Heart right ventricle (tissue), 16 donors: ENCODE measurements at regions of chr1 and their contacts with region 1.

Region 1: GRCh38 chr1:8348777-8349491 is 31.0 kb downstream of the SLC45A1 start:
- DNase-seq: peak; percentile 63 to 76
- ATAC-seq: peak; percentile 32 to 73 (median 58)
- H3K4me3 ChIP-seq: no peak overlapping the region
- H3K27ac ChIP-seq: no peak overlapping the region
- H3K4me1 ChIP-seq: peaks cover 9 to 60% (median 42%) of the 10 kb centered on the region in 9 donors
- H3K27me3 ChIP-seq: no peaks in the 10 kb centered on the region
- CTCF ChIP-seq: peak; percentile 80 to 90 (median 85)

Region 2: GRCh38 chr1:7975212-7975865 is 373.6 kb before region 1 on chr1:
- intact Hi-C with region 1: loop called in 3 of 10 experiments (anchors 5 to 10 kb)
- DNase-seq: peak; percentile 59 to 60
- ATAC-seq: peak; percentile 74 to 98 (median 94)
- H3K4me3 ChIP-seq: no peak overlapping the region
- H3K27ac ChIP-seq: no peak overlapping the region
- H3K4me1 ChIP-seq: peaks cover 0 to 16% (median 7%) of the 10 kb centered on the region in 9 donors
- H3K27me3 ChIP-seq: no peaks in the 10 kb centered on the region
- CTCF ChIP-seq: peak; percentile 69 to 89 (median 81)

Region 3: GRCh38 chr1:8015036-8015808 is 333.7 kb before region 1 on chr1:
- intact Hi-C with region 1: loop called in 4 of 10 experiments (anchors 10 kb)
- DNase-seq: peak in 1 of 2 donors; percentile 78
- ATAC-seq: peak; percentile 52 to 82 (median 75)
- H3K4me3 ChIP-seq: peak overlapping the region in 1 of 10 donors; percentile 8
- H3K27ac ChIP-seq: peak overlapping the region in 8 of 10 donors; percentile 9 to 56 (median 38)
- H3K4me1 ChIP-seq: peaks cover 8 to 52% (median 36%) of the 10 kb centered on the region in 9 donors
- H3K27me3 ChIP-seq: peaks cover 0 to 6% (median 0%) of the 10 kb centered on the region in 7 donors
- CTCF ChIP-seq: peak; percentile 33 to 80 (median 66)

Region 4: DNA sequence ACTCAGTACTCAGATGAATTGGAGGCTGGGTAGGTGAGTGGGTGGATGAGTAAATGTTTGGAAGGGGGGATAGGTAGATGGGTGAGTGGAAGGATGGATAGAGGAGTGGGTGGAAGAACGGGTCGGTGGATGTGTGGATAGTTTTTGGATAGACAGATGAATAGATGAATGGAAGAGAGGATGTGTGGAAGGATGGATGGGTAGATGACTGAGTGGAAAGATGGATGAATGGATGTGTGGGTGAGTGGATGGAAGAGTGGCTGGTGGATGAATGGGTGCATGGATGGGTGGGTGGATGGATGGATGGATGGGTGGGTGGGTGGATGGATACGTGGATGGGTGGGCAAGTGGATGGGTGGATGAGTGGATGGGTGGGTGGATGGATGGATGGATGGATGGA is 27.3 kb before region 1 on chr1:
- intact Hi-C with region 1: loop called in 1 of 10 experiments (anchors 1 kb)
- DNase-seq: no peak
- ATAC-seq: no peak
- H3K4me3 ChIP-seq: no peak overlapping the region
- H3K27ac ChIP-seq: no peak overlapping the region
- H3K4me1 ChIP-seq: peaks cover 7 to 34% (median 23%) of the 10 kb centered on the region in 9 donors
- H3K27me3 ChIP-seq: peaks cover 0 to 26% (median 0%) of the 10 kb centered on the region in 7 donors
- CTCF ChIP-seq: no peak

Region 5: DNA sequence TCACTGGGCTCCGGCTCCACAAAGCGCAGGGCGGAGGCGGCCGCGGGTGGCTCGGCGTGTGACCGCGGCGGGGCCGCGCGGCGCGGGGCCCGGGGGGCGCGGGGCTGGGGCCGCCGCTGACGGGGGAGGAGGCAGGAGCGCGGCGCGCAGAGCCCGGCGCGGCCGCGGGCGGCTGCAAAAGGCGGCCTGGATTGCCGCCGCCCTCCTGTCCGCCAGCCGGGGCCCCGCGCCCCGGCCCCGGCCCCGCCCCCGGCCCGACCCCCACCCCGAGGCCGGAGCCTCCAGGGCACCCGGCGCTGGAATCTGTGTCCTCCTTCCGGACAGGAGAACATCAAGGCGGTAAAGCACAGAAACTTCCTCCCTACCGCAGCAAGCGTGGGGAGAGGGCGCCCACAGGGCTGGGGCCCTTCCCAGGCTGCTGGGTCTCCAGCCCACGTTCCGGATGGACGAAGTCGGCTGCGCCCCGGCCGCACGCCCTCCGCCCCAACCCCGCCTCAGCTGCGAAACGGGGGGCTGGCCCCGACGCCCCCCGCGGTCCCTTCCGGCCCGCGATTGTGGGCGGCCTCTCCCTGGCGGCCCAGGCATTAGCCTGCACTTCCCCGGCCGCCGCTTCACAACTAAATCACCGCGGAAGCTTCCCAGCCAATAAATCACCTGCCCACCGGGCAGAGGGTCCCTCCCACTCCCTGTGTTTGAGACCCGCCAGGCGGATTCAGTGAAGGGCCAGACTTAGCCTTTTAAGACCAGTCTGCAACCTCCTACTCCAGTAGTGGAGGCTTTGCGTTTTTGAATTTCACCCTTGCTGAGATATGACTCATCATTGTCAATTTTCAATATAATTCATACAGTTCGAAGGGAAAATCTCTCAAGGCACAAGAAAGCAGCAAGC is 75.0 kb after region 1 on chr1:
- intact Hi-C with region 1: loop called in 3 of 10 experiments (anchors 5 to 10 kb)
- DNase-seq: peak; percentile 54 to 60
- ATAC-seq: peak; percentile 43 to 63 (median 58)
- H3K4me3 ChIP-seq: peak overlapping the region; percentile 67 to 88 (median 83)
- H3K27ac ChIP-seq: peak overlapping the region; percentile 95 to 99 (median 98)
- H3K4me1 ChIP-seq: peaks cover 7 to 85% (median 65%) of the 10 kb centered on the region in 9 donors
- H3K27me3 ChIP-seq: no peaks in the 10 kb centered on the region
- CTCF ChIP-seq: peak in 4 of 9 donors; percentile 13 to 28 (median 20)

Region 6: GRCh38 chr1:8702850-8703810 is 354.2 kb after region 1 on chr1:
- intact Hi-C with region 1: loop called in 1 of 10 experiments (anchors 10 kb)
- DNase-seq: peak; percentile 90 to 92
- ATAC-seq: peak; percentile 92 to 97 (median 95)
- H3K4me3 ChIP-seq: peak overlapping the region; percentile 51 to 89 (median 67)
- H3K27ac ChIP-seq: peak overlapping the region; percentile 77 to 92 (median 86)
- H3K4me1 ChIP-seq: peaks cover 4 to 77% (median 49%) of the 10 kb centered on the region in 9 donors
- H3K27me3 ChIP-seq: no peaks in the 10 kb centered on the region
- CTCF ChIP-seq: peak in 5 of 9 donors; percentile 10 to 45 (median 40)